ENCODE measurements at regions of chr9 and their contacts with region 1.

Region 1: GRCh38 chr9:136605988-136606660 is 56.6 kb upstream of the EGFL7 start:
- DNase-seq: no peak
- ATAC-seq: peak in 3 of 4 donors; percentile 26 to 44 (median 36)
- H3K4me3 ChIP-seq: no peak overlapping the region
- H3K27ac ChIP-seq: no peak overlapping the region
- H3K4me1 ChIP-seq: peaks cover 6% of the 10 kb centered on the region
- H3K27me3 ChIP-seq: peaks cover 0 to 6% (median 0%) of the 10 kb centered on the region in 3 donors
- CTCF ChIP-seq: no peak

Region 2: GRCh38 chr9:136572003-136572827 is 33.9 kb before region 1 on chr9:
- intact Hi-C with region 1: loop called in 1 of 2 experiments (anchors 5 kb)
- DNase-seq: peak in 1 of 2 donors; percentile 48
- ATAC-seq: no peak
- H3K4me3 ChIP-seq: no peak overlapping the region
- H3K27ac ChIP-seq: no peak overlapping the region
- H3K4me1 ChIP-seq: peaks cover 7% of the 10 kb centered on the region
- H3K27me3 ChIP-seq: no peaks in the 10 kb centered on the region
- CTCF ChIP-seq: no peak

Measured in psoas muscle (tissue), 8 donors.